ENCODE measurements at regions of chr10 and their contacts with region 1.

Region 1: DNA sequence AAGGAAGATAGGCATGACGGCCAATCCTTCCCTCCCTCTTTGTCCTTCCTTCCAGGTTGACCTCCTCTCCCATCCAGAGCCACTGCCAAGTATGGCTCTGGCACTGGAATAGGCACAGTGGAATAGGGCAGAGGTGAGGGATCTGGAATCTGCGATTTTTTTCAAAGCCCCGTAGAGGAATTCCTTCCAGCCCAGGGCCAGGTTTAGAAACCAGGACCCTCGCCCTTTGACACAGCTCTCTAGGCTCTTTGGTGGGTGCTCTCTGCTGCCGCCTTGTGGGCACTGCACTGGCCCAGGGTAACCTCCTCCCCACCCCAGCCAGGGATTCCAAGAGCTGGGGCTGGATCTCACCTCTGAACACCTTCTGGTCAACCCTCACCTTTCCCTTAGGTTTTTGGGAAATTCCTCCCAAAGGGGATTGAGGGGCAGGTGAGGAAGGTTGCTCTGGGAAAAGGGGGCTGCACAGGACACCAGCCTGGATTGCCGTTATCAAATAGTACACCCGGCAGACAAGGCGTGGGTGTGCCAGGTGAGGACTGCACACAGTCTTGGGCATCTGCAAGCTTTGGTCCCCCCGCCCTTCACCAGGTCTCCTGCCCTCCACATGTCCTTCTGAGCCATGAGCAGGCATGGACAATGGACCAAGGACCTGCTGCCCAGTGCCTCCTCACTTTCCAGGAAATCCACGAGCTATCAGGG is 22.8 kb downstream of the C10orf105 start:
- DNase-seq: peak; percentile 65
- H3K4me3 Mint-ChIP-seq: no peak overlapping the region
- H3K27ac Mint-ChIP-seq: no peak overlapping the region
- H3K4me1 Mint-ChIP-seq: no peaks in the 10 kb centered on the region
- H3K27me3 Mint-ChIP-seq: no peaks in the 10 kb centered on the region
- CTCF ChIP-seq: peak; percentile 84

Region 2: GRCh38 chr10:71234970-71235685 is 461.6 kb before region 1 on chr10:
- CTCF ChIA-PET with region 1: no interaction called
- POLR2A ChIA-PET with region 1: no interaction called
- intact Hi-C with region 1: no loop called
- DNase-seq: no peak
- H3K4me3 Mint-ChIP-seq: no peak overlapping the region
- H3K27ac Mint-ChIP-seq: no peak overlapping the region
- H3K4me1 Mint-ChIP-seq: peaks cover 11% of the 10 kb centered on the region
- H3K27me3 Mint-ChIP-seq: no peaks in the 10 kb centered on the region
- CTCF ChIP-seq: no peak

Region 3: DNA sequence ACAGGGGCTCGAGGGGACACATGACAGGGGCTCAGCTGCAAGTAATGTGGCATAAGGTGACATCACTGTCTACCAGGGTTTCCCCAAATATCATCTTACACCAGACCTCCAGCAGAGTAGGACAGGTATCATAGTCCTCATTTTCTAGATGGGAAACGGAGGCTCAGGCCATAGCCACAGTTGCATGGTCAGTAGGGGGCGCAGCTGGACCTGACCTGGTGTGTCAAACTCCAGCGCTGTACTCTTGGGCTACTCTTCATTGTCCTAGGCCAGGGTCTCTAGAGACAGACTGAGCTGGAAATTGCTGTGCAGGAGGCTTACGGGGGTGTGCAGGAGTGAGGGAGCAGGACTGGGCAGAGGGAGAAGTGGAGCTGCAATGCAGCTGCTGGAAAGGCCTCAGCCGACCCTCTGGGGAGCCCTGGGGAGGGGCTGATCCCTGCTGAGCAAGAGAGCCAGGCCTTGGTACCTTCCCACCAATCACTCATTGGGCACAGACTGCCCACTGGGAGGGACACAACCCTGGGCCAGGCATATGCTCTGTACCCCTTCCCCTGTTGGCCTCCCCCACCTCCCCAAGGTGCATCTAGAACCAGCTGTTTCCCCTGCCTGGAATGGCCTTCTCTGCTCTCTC is 210.2 kb before region 1 on chr10:
- CTCF ChIA-PET with region 1: no interaction called
- POLR2A ChIA-PET with region 1: no interaction called
- intact Hi-C with region 1: loop called (anchors 5 kb)
- DNase-seq: peak; percentile 54
- H3K4me3 Mint-ChIP-seq: no peak overlapping the region
- H3K27ac Mint-ChIP-seq: no peak overlapping the region
- H3K4me1 Mint-ChIP-seq: no peaks in the 10 kb centered on the region
- H3K27me3 Mint-ChIP-seq: peaks cover 58% of the 10 kb centered on the region
- CTCF ChIP-seq: peak; percentile 52

Region 4: GRCh38 chr10:71708301-71708703 is 11.5 kb after region 1 on chr10:
- CTCF ChIA-PET with region 1: interaction called, 57 read pairs
- POLR2A ChIA-PET with region 1: interaction called, 3 read pairs
- intact Hi-C with region 1: no loop called
- DNase-seq: peak; percentile 47
- H3K4me3 Mint-ChIP-seq: no peak overlapping the region
- H3K27ac Mint-ChIP-seq: no peak overlapping the region
- H3K4me1 Mint-ChIP-seq: peaks cover 11% of the 10 kb centered on the region
- H3K27me3 Mint-ChIP-seq: no peaks in the 10 kb centered on the region
- CTCF ChIP-seq: peak; percentile 84

Region 5: DNA sequence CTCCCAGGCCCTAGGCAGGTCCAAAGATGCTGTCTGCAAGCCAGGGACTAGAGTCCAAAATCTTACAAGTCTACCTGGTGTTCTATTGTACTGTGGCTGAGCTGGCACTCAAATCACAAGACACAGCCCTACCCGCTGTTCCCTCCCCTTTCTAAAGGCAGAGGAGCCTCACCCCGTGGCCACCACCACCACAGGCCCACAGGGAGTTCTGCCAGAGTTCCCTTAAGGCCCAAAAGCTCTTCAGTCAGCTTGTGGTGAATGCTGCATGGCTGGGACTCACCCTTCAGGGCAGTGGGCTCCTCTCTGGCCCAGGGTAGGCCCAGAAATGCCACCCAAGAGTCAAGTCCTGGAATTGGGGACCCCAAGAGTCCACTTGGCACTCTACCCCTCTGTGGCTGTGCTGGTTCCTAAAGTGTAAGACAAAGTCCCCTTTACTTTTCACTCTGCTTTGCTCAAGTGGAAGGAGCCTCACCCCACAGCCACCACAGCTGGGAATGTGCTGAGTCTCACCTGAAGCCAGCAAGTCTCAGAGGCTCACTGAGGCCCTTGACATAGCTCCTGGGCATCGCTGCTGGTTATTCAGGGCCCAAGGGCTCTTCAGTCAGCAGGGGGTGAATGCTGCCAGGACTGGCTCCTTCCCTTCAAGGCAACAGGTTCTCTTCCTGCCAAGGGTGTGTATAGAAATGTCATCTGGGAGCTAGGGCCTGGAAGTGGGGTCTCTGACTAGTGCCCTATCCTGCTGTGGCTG is 203.1 kb after region 1 on chr10:
- CTCF ChIA-PET with region 1: no interaction called
- POLR2A ChIA-PET with region 1: interaction called, 4 read pairs
- intact Hi-C with region 1: loop called (anchors 5 kb)
- DNase-seq: no peak
- H3K4me3 Mint-ChIP-seq: no peak overlapping the region
- H3K27ac Mint-ChIP-seq: no peak overlapping the region
- H3K4me1 Mint-ChIP-seq: no peaks in the 10 kb centered on the region
- H3K27me3 Mint-ChIP-seq: no peaks in the 10 kb centered on the region
- CTCF ChIP-seq: no peak

Measured in MCF 10A (cell line).